HepG2 (cell line): ENCODE measurements at regions of chr20 and their contacts with region 1.

Region 1: GRCh38 chr20:2093159-2093781 is 8.4 kb upstream of the STK35 start:
- DNase-seq: peak; percentile 50
- ATAC-seq: peak; percentile 85
- H3K4me3 ChIP-seq: no peak overlapping the region
- H3K27ac ChIP-seq: no peak overlapping the region
- H3K4me1 ChIP-seq: no peaks in the 10 kb centered on the region
- H3K27me3 ChIP-seq: peaks cover 0 to 2% of the 10 kb centered on the region in 2 experiments; a peak in 1 of 5 replicates
- CTCF ChIP-seq: peak; percentile 92
- EP300 ChIP-seq: no peak
- POLR2A ChIP-seq: no peak
- RAD21 ChIP-seq: peak; percentile 86

Region 2: DNA sequence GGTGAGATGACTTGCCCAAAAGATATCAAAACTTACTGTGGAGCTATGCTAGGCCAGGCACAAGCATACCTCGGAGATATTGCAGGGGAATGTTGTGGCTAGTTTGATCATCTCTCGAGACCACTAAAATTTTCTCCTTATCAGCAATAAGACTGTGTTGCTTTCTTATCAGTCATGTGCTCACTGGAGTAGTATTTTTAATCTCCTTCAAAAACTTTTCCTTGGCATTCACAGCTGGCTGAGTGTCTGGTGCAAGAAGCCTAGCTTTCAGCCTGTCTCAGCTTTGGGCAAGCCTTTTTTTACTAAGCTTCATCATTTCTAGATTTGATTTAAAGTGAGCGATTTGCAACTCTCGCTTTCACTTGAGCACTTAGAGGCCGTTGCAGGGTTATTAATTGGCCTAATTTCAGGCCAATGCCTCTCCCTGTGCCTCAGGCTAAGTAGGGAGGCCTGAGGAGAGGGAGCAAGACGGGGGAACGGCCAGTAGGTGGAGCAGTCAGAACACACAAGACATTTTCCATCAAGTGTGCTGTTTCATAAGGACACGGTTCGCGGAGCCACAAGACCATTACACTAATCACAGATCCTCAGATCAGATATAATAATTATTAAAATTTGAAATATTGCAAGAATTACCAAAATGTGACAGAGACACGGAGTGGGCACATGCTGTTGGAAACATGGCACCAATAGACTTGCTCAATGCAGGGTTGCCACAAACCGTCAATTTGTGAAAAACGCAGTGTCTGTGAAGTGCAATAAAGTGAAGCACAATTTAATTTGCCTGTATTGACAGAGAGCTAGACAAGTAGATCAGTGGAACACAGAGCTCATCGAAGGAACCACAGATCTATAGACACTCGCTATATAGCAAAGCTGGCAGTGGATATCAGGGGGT is 328.9 kb before region 1 on chr20:
- CTCF ChIA-PET with region 1: no interaction called
- POLR2A ChIA-PET with region 1: no interaction called
- in situ Hi-C with region 1: no loop called
- intact Hi-C with region 1: loop called (anchors 10 kb)
- DNase-seq: peak; percentile 73
- ATAC-seq: peak; percentile 99
- H3K4me3 ChIP-seq: no peak overlapping the region
- H3K27ac ChIP-seq: no peak overlapping the region
- H3K4me1 ChIP-seq: no peaks in the 10 kb centered on the region
- H3K27me3 ChIP-seq: no peaks in the 10 kb centered on the region; a peak in 1 of 5 replicates
- CTCF ChIP-seq: peak; percentile 90
- EP300 ChIP-seq: no peak
- POLR2A ChIP-seq: no peak
- RAD21 ChIP-seq: peak; percentile 45; the same call in 1 of the 2 replicates

Region 3: DNA sequence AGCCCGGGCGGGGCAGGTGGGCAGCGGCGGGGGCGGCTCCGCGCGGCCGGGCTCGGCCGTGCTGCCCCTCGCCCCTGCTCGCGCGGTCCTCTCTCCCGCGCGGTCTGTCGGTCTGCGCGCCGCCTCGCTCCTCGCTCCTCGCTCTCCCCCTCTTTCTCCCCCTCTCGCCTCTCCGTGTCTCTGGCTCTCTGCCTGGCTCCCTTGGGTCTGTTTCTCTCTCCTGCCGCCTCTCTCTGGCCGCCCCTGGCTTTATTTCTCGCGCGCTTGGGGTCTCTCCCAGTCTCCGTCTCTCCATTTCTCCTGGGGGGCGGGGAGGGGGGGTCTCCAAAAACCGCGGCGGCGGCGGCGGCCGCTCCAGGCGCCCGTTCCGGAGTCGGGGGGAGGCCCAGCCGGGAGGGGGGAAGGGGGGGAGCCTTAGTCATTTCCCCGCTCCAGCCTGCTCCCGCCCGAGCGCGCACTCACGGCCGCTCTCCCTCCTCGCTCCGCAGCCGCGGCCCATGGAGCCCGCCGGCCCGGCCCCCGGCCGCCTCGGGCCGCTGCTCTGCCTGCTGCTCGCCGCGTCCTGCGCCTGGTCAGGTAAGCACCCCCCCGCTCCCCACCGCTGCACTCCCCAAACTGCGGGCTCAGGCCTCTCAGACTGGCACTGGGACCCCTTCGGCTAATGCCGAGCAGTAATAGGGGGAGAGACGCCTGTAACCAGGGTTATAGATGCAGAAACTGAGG is 198.2 kb before region 1 on chr20 and contains the start of gene SIRPA:
- CTCF ChIA-PET with region 1: no interaction called
- POLR2A ChIA-PET with region 1: no interaction called
- in situ Hi-C with region 1: no loop called
- intact Hi-C with region 1: loop called (anchors 5 kb)
- DNase-seq: no peak
- ATAC-seq: peak; percentile 58
- H3K4me3 ChIP-seq: peak within 1 kb of the TSS; percentile 70 to 81 (median 76)
- H3K27ac ChIP-seq: no peak within 1 kb of the TSS
- H3K4me1 ChIP-seq: peaks cover 62% of the 10 kb centered on the region
- H3K27me3 ChIP-seq: peaks cover 11 to 20% of the 10 kb centered on the region in 2 experiments
- CTCF ChIP-seq: no peak
- EP300 ChIP-seq: no peak
- POLR2A ChIP-seq: no peak
- RAD21 ChIP-seq: no peak
- total RNA-seq, gene SIRPA: 13.1 and 17.6 TPM in 2 replicates

Region 4: DNA sequence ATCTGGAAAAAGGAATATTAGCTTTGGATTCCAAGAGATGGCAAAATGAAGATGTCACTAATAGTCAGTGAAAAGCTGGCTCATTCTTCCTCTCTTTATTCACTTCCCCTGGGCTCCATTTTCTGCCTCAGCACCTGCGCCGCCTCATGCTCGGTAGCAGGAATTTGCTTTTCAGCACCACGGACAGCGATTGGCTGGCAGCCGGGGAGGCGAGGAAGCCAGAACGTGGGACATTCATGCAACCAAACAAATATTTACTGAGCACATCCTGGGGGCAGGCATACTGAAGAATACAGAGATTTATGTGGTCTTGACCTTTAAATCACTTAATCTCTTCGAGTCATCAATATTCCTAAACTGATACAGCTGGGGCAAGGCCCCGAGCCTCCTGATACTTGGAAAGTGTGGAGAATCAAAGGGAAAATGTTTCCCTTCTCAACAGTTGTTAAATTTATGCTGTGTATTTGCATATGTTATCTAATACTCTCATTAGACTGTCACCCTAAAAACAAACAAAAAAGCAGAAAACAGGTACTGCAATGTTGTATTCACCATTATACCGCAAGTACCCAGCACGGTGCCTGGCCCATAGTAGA is 87.3 kb before region 1 on chr20:
- CTCF ChIA-PET with region 1: interaction called, 25 read pairs
- POLR2A ChIA-PET with region 1: no interaction called
- in situ Hi-C with region 1: loop called (anchors 5 kb)
- intact Hi-C with region 1: loop called (anchors 1 kb)
- DNase-seq: peak; percentile 78
- ATAC-seq: peak; percentile 89
- H3K4me3 ChIP-seq: no peak overlapping the region
- H3K27ac ChIP-seq: no peak overlapping the region
- H3K4me1 ChIP-seq: peaks cover 9% of the 10 kb centered on the region
- H3K27me3 ChIP-seq: no peaks in the 10 kb centered on the region
- CTCF ChIP-seq: peak; percentile 48
- EP300 ChIP-seq: no peak; a peak in 1 of 4 replicates
- POLR2A ChIP-seq: no peak
- RAD21 ChIP-seq: no peak